Prostate gland (tissue), 2 donors: ENCODE measurements at regions of chr15 and their contacts with region 1.

Region 1: DNA sequence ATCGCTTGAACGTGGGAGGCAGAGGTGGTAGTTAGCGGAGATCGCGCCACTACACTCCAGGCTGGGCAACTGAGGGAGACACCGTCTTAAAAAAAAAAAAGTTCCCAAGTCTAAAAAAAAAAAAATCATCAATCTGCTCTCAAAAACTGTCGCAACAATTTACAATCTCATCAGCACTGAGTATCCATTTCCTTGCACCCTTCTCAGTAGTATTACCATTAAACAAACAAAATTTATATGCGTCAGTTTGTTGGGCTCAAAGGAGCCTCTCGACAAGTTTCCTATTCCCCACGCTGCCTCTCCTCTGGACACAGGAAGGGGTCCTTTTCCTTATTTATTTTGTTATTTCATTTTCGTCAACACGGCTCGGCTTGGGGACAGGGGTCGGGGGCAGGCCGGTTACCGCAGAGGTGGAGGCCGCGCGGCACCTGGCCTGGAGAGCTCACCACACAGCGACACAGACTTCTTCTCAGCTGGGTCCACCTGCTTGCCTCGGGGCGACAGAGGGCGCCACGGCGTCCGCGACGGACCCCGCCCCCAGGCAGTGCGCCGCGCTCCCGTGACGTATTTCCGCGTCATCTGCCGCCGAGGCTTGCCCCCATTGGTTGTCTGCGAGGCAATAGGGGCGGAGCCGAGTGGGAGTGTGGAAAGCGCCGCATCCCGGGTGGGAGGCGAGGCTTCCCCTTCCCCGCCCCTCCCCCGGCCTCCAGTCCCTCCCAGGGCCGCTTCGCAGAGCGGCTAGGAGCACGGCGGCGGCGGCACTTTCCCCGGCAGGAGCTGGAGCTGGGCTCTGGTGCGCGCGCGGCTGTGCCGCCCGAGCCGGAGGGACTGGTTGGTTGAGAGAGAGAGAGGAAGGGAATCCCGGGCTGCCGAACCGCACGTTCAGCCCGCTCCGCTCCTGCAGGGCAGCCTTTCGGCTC is at the start of gene MAP2K1:
- DNase-seq: peak; percentile 97
- H3K4me3 ChIP-seq: peak within 1 kb of the TSS; percentile 86 to 98
- H3K27ac ChIP-seq: peak within 1 kb of the TSS; percentile 89 to 94
- H3K4me1 ChIP-seq: peaks cover 7% of the 10 kb centered on the region
- H3K27me3 ChIP-seq: no peaks in the 10 kb centered on the region
- CTCF ChIP-seq: peak; percentile 45 to 91 (median 86)
- POLR2A ChIP-seq: peak; percentile 75
- total RNA-seq, gene MAP2K1: 28.0 to 29.0 TPM

Region 2: DNA sequence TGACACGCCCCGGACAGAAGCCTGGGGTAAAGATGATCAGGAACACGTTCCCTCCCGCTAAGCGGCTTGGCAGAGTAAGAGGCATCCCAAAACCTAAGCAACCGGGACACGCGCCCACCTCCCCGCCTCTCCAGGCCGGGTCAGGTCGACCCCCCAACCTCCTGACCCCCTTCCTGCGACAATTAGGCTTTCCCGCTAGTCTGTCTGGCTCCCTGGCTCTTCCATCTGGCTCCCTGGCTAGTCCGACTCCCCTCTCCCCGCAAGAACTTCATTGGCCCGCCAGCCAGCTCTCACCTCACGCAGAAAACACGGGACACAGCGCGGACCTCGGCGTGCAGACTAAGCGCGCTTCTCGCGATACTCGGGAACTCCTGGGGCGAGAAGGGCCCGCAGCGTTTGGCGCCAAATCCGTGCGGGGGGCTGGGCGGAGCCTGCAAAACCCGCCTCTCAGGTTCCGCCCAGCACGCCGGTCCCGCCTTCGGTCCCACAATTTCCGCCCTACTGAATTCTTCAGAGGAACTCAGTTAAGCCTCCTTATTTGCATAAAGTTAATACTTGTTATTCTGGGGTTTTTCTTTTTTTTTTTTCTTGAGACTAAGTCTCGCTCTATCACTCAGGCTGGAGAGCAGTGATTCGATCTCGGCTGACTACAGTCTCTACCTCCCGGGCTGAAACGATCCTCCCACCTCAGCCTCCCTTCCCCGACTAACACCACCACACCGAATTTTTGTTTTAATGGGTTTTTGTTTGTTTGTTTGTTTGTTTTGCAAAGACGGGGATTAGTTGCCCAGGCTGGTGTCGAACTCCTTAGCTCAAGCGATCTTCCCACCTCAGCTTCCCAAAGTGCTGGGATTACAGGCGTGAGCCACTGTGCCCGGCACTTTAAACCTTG is 29.9 kb before region 1 on chr15 and contains the start of gene TIPIN:
- intact Hi-C with region 1: loop called (anchors 2 kb)
- DNase-seq: peak; percentile 90
- H3K4me3 ChIP-seq: peak within 1 kb of the TSS; percentile 50 to 53
- H3K27ac ChIP-seq: peak within 1 kb of the TSS; percentile 56 to 70
- H3K4me1 ChIP-seq: no peaks in the 10 kb centered on the region
- H3K27me3 ChIP-seq: no peaks in the 10 kb centered on the region
- CTCF ChIP-seq: no peak
- POLR2A ChIP-seq: peak; percentile 24
- total RNA-seq, gene TIPIN: 8.0 to 20.1 TPM

Region 3: DNA sequence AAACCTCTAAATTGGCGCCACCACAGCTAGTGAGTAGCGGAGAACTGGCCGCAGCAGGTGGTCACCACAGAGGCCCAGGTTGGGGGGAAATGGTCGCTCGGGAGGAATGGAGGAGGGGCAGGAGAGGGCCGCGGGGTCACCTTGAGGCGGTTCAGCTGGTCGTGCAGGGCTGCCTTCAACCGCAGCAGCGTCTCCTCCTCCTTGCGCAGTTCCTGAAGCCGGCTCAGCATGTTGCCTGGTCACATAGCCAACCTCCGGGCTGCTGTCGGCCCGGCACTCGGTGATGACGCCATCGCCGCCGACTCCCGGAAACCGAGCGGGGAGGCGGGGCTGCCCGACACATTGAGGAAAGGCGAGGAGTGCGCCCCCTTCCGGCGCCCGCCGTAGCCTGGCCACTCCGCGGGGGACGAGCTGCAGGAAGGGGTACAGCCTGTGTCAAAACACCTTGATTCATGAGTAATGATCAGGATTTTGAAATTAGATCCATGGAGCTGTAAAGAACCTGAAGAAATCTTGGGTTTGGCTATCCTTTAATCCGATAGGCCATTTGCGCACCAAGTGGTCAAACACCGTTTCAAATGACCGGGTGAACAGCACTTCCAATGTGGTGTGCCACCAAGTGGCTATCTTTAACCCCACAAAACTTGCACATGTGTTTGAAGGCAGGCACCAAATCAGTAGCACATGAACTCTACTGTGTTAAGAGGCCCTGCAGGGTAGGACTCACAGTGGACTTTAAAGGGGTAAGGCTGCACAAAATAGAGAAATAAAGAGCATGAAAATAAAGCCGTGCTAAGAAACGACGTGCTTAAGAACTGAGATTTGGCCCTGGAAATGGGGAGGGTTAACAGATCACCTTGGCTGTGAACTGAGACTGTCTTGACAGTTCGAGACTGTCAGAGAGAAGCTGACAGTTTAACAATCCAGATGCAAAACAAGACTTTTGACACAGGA is 111.3 kb after region 1 on chr15 and contains the start of gene SNAPC5:
- intact Hi-C with region 1: loop called (anchors 1 kb)
- DNase-seq: peak; percentile 95
- H3K4me3 ChIP-seq: peak within 1 kb of the TSS; percentile 84 to 88
- H3K27ac ChIP-seq: peak within 1 kb of the TSS; percentile 77 to 81
- H3K4me1 ChIP-seq: peaks cover 5% of the 10 kb centered on the region
- H3K27me3 ChIP-seq: no peaks in the 10 kb centered on the region
- CTCF ChIP-seq: peak; percentile 98 to 99 (median 99)
- POLR2A ChIP-seq: peak; percentile 68
- total RNA-seq, gene SNAPC5: 23.6 to 27.0 TPM